ENCODE measurements at regions of chr1 and their contacts with region 1.

Region 1: DNA sequence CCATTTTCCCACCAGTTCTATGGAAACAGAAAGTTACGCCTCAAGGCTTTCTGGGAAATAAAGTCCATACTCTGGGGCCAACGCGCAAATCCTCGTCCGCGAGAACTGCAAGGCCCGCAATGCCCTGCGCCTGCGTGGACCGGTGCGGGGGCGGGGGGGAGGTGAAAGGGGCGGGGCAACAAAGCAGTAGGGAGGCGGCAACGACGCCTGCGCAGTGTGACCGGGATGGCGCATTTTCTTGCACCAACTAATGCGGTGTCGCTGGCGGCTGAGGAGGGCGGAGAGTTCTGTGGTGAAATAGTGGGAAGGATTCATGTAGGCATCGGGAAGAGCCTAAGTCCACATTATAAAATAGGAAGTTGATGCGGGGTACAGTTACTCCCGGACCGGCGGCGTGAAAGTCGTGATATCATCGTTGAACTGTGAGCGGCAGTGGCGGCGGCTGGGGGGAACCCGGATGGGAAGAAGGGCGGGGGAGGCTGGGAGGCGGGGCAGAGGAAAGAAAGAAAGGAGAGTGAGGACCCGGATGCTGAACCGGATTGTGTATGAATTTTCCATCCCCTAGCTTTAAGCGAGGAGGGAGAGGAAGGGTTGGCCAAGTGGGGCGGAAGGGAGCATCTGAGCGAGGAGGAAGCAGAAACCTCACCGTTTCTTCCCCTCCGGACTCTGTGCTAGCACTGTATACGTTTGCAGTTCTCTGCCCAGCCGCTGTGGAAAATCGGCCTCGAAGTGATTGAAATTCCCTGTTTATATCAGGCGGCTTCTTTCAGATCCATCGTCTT is at the start of gene GGPS1:
- DNase-seq: peak; percentile 100
- ATAC-seq: peak; percentile 67
- H3K4me3 ChIP-seq: peak within 1 kb of the TSS; percentile 95 to 99
- H3K27ac ChIP-seq: peak within 1 kb of the TSS; percentile 92
- H3K4me1 ChIP-seq: peaks cover 3 to 22% of the 10 kb centered on the region in 2 experiments; a peak in 3 of 4 replicates
- H3K27me3 ChIP-seq: no peaks in the 10 kb centered on the region
- CTCF ChIP-seq: peak in 1 of 3 experiments; percentile 20; a peak in 1 of 6 replicates
- POLR2A ChIP-seq: peak; percentile 94
- RAD21 ChIP-seq: no peak
- total RNA-seq, gene GGPS1: 30.6 TPM

Region 2: DNA sequence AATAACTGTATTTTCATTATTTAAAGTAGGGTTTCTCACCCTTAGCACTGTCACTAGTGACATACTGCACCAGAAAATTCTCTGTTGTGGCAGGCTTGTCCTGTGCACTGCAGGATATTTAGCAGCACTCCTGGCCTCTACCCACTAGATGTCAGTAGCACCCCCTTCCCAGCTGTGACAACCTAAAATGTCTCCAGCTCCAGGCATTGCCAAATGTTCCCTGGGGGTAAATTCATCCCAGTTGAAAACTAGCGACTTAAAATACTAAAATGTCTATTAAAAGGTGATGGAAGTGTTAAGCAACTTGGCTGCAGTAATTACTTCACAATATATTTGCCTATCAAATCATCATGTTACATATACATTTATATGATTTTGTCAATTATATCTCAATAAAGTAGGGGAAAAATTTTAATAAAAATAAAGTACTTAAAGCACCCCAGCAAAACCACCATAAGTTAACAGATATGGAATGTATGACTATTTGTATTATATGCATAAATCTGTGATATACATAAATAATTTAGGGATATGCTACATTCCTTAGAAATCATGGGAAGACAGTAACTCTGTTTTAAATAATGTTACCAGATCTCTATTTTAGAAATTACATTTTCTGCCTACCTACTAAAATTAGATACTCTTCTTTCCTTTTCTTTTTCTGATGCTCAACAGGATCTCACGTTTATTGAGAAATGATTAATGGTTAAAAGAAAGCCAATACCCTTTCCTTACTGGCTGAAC is 75.2 kb before region 1 on chr1:
- CTCF ChIA-PET with region 1: no interaction called
- POLR2A ChIA-PET with region 1: no interaction called
- RAD21 ChIA-PET with region 1: no interaction called
- intact Hi-C with region 1: loop called (anchors 5 kb)
- DNase-seq: peak; percentile 54
- ATAC-seq: peak; percentile 100
- H3K4me3 ChIP-seq: no peak overlapping the region
- H3K27ac ChIP-seq: no peak overlapping the region
- H3K4me1 ChIP-seq: no peaks in the 10 kb centered on the region
- H3K27me3 ChIP-seq: no peaks in the 10 kb centered on the region
- CTCF ChIP-seq: peak; percentile 84 to 89 (median 87)
- POLR2A ChIP-seq: no peak
- RAD21 ChIP-seq: peak; percentile 89

Region 3: DNA sequence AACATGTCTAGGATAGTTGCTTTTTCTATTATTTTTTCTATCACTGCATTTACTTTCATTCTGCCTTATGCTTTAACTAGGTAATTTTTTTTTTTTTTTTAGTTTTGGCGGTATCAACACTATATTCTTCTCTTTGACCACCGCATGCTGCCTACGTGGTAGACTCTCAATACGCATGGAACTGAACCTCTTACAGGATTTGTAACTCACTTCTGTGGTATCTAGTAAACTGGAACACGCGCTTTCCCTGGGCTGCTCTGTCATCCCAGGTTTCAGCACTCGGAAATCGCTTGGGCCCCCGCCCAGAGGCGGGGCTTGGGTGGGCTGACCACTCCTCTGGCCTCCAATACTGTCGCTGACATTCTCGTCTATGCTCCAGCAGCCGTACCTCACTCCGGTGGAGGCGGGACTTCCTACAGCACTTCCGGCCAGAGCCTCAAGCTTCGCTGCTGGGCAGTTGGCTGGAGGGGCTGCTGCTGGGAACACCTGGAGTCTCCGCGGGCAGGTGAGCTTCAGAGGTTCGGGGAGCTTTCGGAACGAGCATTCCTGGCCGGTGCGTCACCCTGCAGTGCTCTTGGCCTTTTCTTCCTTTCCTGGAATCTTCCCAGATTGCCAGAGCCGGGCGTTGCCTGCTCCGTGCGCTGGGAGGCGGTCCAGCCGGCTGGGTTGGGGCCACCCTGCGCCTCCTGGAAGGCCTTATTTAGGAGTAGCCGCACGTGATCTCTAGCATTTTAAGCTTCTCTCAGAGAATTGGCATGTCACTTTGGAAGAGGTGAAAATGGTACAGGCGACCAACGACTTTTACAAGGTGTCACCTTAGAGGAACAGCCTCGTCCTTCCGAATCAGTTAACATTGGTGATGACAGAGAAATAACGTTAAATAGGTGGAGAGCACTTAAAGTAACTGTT is 38.7 kb after region 1 on chr1 and contains the start of gene TBCE:
- CTCF ChIA-PET with region 1: no interaction called
- POLR2A ChIA-PET with region 1: interaction called, 10 read pairs
- RAD21 ChIA-PET with region 1: no interaction called
- intact Hi-C with region 1: loop called (anchors 1 kb)
- DNase-seq: peak; percentile 97
- ATAC-seq: peak; percentile 98
- H3K4me3 ChIP-seq: peak within 1 kb of the TSS; percentile 84 to 87
- H3K27ac ChIP-seq: peak within 1 kb of the TSS; percentile 81
- H3K4me1 ChIP-seq: peaks cover 0 to 18% of the 10 kb centered on the region in 2 experiments; a peak in 3 of 4 replicates
- H3K27me3 ChIP-seq: no peaks in the 10 kb centered on the region
- CTCF ChIP-seq: no peak; a peak in 1 of 6 replicates
- POLR2A ChIP-seq: peak; percentile 94
- RAD21 ChIP-seq: no peak
- total RNA-seq, gene TBCE: 20.8 TPM

Region 4: DNA sequence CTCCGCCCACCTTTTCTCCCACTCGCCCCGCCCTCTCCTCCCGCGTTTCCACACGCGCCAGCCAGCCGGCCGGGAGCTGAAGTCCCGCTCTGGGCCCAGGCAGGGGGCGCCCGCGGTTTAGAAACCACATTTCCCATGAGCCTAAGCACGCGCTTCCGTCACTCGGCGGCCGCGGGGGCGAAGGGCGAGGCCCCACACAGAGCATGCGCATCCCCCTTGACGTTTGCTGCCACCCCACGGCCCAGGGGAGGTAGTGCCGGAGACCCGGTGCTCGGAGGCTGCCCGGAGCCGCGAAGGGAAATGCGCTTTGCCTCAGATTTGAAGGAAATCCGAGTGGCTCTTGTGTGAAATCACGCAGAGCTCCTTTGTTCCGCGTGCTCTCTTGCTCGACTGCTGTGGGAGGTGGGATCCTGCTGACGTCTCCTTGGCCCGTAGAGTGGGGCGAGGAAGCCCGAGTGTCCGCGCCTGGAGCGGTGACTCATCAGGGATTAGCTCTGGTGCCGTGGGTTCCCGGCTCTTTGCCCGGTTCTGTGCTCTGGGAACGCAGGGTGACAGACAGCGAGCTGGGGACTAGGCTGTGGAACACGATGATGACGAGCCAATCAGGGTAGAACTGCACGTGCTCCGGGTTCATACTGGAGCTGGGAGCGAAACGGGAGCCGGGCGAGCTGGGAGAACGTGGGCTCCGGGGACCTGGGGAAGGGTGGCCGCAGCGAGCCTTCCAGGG is 176.1 kb after region 1 on chr1:
- CTCF ChIA-PET with region 1: no interaction called
- POLR2A ChIA-PET with region 1: no interaction called
- RAD21 ChIA-PET with region 1: no interaction called
- intact Hi-C with region 1: loop called (anchors 2 kb)
- DNase-seq: peak; percentile 98
- ATAC-seq: peak; percentile 86
- H3K4me3 ChIP-seq: peak overlapping the region; percentile 75 to 84
- H3K27ac ChIP-seq: peak overlapping the region; percentile 99
- H3K4me1 ChIP-seq: peaks cover 10 to 38% of the 10 kb centered on the region in 2 experiments; a peak in 3 of 4 replicates
- H3K27me3 ChIP-seq: no peaks in the 10 kb centered on the region
- CTCF ChIP-seq: peak; percentile 77 to 84 (median 77); a peak in 5 of 6 replicates
- POLR2A ChIP-seq: peak; percentile 52
- RAD21 ChIP-seq: peak; percentile 69

Measured in HCT116 (cell line).